ENCODE measurements at regions of chr22 and their contacts with region 1.

Region 1: DNA sequence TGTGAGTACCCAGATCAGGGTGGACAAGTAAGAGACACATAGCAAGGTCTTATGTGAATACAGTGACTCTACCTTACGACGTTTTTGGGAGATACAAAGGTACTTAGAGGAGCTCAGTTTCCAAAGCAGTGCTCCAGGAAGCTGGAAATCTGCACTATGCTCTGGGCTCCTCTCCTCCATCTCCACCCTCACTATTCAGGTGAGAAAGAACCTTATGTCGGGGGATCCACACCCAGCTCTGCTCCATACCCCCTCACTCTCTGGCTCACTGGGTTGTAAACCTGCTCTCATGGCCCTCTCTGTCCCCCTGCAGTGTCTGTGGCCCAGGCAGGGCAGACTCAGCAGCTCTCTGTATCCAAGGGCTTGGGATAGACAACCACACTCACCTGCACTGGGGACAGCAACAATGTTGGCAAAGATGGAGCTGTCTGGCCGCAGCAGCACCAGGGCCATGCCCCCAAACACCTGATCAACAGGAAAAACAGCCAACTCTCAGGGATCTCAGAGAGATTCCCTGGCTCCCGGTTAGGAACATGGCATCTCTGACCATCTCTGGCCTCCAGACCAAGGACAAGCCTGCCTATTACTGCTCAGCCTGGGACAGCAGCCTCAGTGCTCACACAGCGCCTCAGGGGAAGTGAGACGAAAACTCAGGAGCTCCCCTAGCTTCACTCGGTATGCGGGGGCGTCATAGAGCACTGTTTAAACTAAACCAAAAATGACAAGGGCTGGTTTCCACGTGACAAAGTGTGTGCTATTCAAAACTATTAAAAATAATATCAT is 60.9 kb upstream of the TOP3B start:
- DNase-seq: peak in 1 of 4 experiments; percentile 63
- ATAC-seq: peak; percentile 72
- H3K4me3 ChIP-seq: no peak overlapping the region
- H3K27ac ChIP-seq: no peak overlapping the region
- H3K4me1 ChIP-seq: peaks cover 0 to 5% of the 10 kb centered on the region in 2 experiments; a peak in 2 of 5 replicates
- H3K27me3 ChIP-seq: peaks cover 28 to 40% of the 10 kb centered on the region in 2 experiments
- CTCF ChIP-seq: no peak
- EP300 ChIP-seq: no peak
- POLR2A ChIP-seq: no peak
- RAD21 ChIP-seq: no peak

Region 2: GRCh38 chr22:22025320-22026156 is 17.9 kb before region 1 on chr22:
- CTCF ChIA-PET with region 1: no interaction called
- POLR2A ChIA-PET with region 1: interaction called, 88 read pairs
- in situ Hi-C with region 1: no loop called
- intact Hi-C with region 1: no loop called
- DNase-seq: peak in 1 of 4 experiments; percentile 58
- ATAC-seq: peak; percentile 7; the same call in 2 of the 3 replicates
- H3K4me3 ChIP-seq: no peak overlapping the region
- H3K27ac ChIP-seq: no peak overlapping the region
- H3K4me1 ChIP-seq: peaks cover 15 to 20% of the 10 kb centered on the region in 2 experiments; a peak in 4 of 5 replicates
- H3K27me3 ChIP-seq: peaks cover 6 to 23% of the 10 kb centered on the region in 2 experiments; a peak in 2 of 5 replicates
- CTCF ChIP-seq: no peak
- EP300 ChIP-seq: no peak
- POLR2A ChIP-seq: no peak
- RAD21 ChIP-seq: no peak

Region 3: DNA sequence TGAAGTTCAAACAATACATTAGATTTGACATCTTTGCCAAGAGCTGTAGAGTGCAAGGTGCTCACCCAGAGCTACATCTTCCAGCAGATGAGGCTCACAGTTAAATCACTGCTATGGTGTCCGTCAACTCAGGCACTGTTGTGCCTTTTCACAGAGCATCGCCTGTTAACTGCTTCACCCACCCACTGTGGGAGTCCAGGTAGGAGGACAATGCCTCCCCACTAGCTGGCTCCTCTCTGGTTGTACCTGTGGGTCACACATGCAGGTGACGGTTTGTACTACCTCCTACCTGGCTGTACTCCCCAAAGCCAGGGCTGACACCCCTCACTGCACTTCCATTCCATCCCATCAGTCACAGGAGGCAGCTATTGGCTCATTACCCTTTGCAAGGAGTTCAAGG is 23.7 kb after region 1 on chr22:
- CTCF ChIA-PET with region 1: no interaction called
- POLR2A ChIA-PET with region 1: interaction called, 110 read pairs
- in situ Hi-C with region 1: no loop called
- intact Hi-C with region 1: loop called (anchors 2 kb)
- DNase-seq: no peak
- ATAC-seq: no peak
- H3K4me3 ChIP-seq: no peak overlapping the region
- H3K27ac ChIP-seq: no peak overlapping the region
- H3K4me1 ChIP-seq: peaks cover 0 to 3% of the 10 kb centered on the region in 2 experiments; a peak in 1 of 5 replicates
- H3K27me3 ChIP-seq: peaks cover 32 to 35% of the 10 kb centered on the region in 2 experiments
- CTCF ChIP-seq: no peak
- EP300 ChIP-seq: no peak
- POLR2A ChIP-seq: no peak
- RAD21 ChIP-seq: no peak

Region 4: DNA sequence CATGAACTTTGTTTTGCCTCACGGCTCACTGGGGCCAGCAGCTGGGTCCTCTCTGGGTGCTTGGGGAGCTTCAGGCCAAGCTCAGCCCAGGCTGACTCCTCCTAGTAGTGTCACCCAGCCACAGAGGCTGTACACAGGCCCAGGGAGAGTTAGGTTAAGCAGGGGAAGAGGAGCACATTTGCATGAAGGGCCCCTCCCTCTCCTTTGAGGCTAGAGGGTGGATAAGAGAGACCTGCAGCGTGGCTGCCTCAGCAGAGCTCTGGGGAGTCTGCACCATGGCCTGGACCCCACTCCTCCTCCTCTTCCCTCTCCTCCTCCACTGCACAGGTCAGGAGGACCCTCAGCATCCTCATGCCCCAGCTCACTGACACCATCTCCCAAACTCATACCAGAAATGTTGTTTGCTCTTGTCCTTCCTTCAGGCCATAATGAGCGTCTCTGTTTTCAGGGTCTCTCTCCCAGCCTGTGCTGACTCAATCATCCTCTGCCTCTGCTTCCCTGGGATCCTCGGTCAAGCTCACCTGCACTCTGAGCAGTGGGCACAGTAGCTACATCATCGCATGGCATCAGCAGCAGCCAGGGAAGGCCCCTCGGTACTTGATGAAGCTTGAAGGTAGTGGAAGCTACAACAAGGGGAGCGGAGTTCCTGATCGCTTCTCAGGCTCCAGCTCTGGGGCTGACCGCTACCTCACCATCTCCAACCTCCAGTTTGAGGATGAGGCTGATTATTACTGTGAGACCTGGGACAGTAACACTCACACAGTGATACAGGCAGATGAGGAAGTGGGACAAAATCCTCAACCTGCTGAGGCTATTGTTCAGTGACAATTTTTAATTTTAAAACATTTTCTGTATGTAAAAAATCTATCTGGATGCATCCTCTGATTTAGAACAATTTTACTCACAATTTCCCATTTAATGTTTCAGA is 118.7 kb after region 1 on chr22:
- CTCF ChIA-PET with region 1: no interaction called
- POLR2A ChIA-PET with region 1: interaction called, 10 read pairs
- in situ Hi-C with region 1: no loop called
- intact Hi-C with region 1: no loop called
- DNase-seq: peak in 2 of 4 experiments; percentile 38 to 48
- ATAC-seq: peak; percentile 61
- H3K4me3 ChIP-seq: no peak overlapping the region
- H3K27ac ChIP-seq: no peak overlapping the region
- H3K4me1 ChIP-seq: no peaks in the 10 kb centered on the region
- H3K27me3 ChIP-seq: peaks cover 0 to 28% of the 10 kb centered on the region in 2 experiments; a peak in 2 of 5 replicates
- CTCF ChIP-seq: no peak
- EP300 ChIP-seq: no peak
- POLR2A ChIP-seq: no peak
- RAD21 ChIP-seq: no peak

Region 5: GRCh38 chr22:22995166-22995565 is 951.7 kb after region 1 on chr22:
- CTCF ChIA-PET with region 1: no interaction called
- POLR2A ChIA-PET with region 1: no interaction called
- in situ Hi-C with region 1: no loop called
- intact Hi-C with region 1: no loop called
- DNase-seq: peak in 3 of 4 experiments; percentile 67 to 72 (median 71)
- ATAC-seq: no peak
- H3K4me3 ChIP-seq: no peak overlapping the region
- H3K27ac ChIP-seq: no peak overlapping the region
- H3K4me1 ChIP-seq: no peaks in the 10 kb centered on the region
- H3K27me3 ChIP-seq: peaks cover 0 to 5% of the 10 kb centered on the region in 2 experiments; a peak in 1 of 5 replicates
- CTCF ChIP-seq: no peak
- EP300 ChIP-seq: no peak
- POLR2A ChIP-seq: no peak
- RAD21 ChIP-seq: no peak

Measured in K562 (cell line).